ENCODE measurements at regions of chr13 and their contacts with region 1.

Region 1: GRCh38 chr13:24727731-24728601 is 36.0 kb upstream of the RNF17 start:
- DNase-seq: peak; percentile 90
- H3K4me3 Mint-ChIP-seq: no peak overlapping the region
- H3K27ac Mint-ChIP-seq: no peak overlapping the region
- H3K4me1 Mint-ChIP-seq: peaks cover 5% of the 10 kb centered on the region
- H3K27me3 Mint-ChIP-seq: peaks cover 36% of the 10 kb centered on the region

Region 2: GRCh38 chr13:24574847-24575246 is 153.1 kb before region 1 on chr13:
- intact Hi-C with region 1: loop called (anchors 2 kb)
- DNase-seq: no peak
- H3K4me3 Mint-ChIP-seq: no peak overlapping the region
- H3K27ac Mint-ChIP-seq: no peak overlapping the region
- H3K4me1 Mint-ChIP-seq: peaks cover 13% of the 10 kb centered on the region
- H3K27me3 Mint-ChIP-seq: peaks cover 18% of the 10 kb centered on the region

Region 3: GRCh38 chr13:24683838-24684599 is 43.9 kb before region 1 on chr13:
- intact Hi-C with region 1: loop called (anchors 2 kb)
- DNase-seq: peak; percentile 84
- H3K4me3 Mint-ChIP-seq: no peak overlapping the region
- H3K27ac Mint-ChIP-seq: peak overlapping the region; percentile 66
- H3K4me1 Mint-ChIP-seq: peaks cover 31% of the 10 kb centered on the region
- H3K27me3 Mint-ChIP-seq: peaks cover 58% of the 10 kb centered on the region

Region 4: DNA sequence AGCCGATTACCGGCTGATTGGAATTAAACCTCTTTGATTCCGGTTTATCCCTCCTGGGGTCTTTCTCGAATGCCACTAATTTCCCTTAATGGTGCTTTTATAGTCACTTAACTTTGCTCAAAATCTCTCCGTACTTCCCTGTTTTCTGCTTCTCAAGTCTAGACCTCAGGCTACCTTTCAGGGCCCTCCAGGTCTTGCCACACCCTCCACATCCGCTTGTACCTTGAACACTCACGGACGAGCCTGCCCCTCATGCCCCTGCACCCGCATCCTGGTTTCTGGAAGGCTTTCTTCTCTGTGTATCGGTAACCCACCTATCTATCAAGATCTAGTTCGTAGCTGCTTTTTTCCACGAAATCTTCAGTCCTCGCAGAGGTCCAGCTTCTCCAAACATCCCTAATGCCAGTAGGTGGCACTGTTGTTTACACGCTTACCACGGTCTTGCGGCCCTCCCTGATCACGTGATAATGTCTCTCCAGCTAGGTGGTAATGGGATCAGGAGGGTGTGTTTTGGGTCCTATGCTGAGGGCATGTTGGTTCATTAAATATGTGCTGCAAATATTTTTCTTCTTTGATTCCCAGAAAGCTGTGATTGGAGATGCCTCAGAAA is 34.0 kb before region 1 on chr13:
- intact Hi-C with region 1: loop called (anchors 1 kb)
- DNase-seq: peak; percentile 84
- H3K4me3 Mint-ChIP-seq: peak overlapping the region; percentile 32
- H3K27ac Mint-ChIP-seq: no peak overlapping the region
- H3K4me1 Mint-ChIP-seq: peaks cover 6% of the 10 kb centered on the region
- H3K27me3 Mint-ChIP-seq: peaks cover 39% of the 10 kb centered on the region

Region 5: GRCh38 chr13:24709186-24709913 is 18.6 kb before region 1 on chr13:
- intact Hi-C with region 1: loop called (anchors 1 kb)
- DNase-seq: peak; percentile 89
- H3K4me3 Mint-ChIP-seq: peak overlapping the region; percentile 71
- H3K27ac Mint-ChIP-seq: peak overlapping the region; percentile 64
- H3K4me1 Mint-ChIP-seq: peaks cover 24% of the 10 kb centered on the region
- H3K27me3 Mint-ChIP-seq: peaks cover 6% of the 10 kb centered on the region